Prostate gland (tissue), 2 donors: ENCODE measurements at regions of chr9 and their contacts with region 1.

Region 1: GRCh38 chr9:35903049-35903448 is 3.0 kb upstream of the HRCT1 start:
- DNase-seq: peak; percentile 59
- H3K4me3 ChIP-seq: no peak overlapping the region
- H3K27ac ChIP-seq: peak overlapping the region in 1 of 2 donors; percentile 28
- H3K4me1 ChIP-seq: peaks cover 34% of the 10 kb centered on the region
- H3K27me3 ChIP-seq: no peaks in the 10 kb centered on the region
- CTCF ChIP-seq: peak; percentile 63 to 93 (median 86)
- POLR2A ChIP-seq: no peak

Region 2: DNA sequence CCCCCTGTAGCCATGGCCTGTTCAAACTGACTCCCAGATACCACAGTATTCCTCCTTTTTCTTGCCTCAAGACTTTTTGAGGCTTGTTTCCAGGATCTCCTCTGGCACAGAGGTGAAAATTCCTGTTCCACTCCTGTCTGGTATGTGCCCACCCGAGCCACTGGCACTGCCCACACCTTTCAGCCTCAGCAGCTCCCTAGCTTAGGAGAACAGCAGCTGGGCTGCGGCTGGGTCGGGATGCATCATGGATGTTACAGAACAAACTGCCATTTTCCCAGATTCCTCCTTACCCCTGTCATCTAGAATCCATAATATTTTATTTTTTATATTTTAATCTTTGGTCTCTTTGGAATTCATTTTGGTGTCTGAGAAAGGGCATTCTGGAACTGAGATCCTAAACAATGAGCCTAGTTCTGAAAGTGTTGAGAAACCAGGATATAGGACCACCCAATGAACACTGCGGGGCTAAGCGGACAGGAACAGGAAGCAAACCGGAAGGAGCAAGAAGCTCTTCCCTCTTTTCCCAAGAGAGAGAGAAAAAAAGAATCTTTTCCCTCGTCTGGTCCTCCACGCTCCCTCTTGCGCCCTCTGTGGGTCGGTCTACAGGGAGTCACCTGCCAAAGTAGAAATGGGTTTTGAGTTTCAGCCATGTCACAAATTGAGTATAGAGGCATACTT is 42.4 kb after region 1 on chr9:
- intact Hi-C with region 1: loop called (anchors 1 kb)
- DNase-seq: peak; percentile 43
- H3K4me3 ChIP-seq: no peak overlapping the region
- H3K27ac ChIP-seq: no peak overlapping the region
- H3K4me1 ChIP-seq: no peaks in the 10 kb centered on the region
- H3K27me3 ChIP-seq: no peaks in the 10 kb centered on the region
- CTCF ChIP-seq: peak; percentile 27 to 67 (median 65)
- POLR2A ChIP-seq: no peak

Region 3: GRCh38 chr9:36011379-36011778 is 108.3 kb after region 1 on chr9:
- intact Hi-C with region 1: loop called (anchors 5 kb)
- DNase-seq: no peak
- H3K4me3 ChIP-seq: no peak overlapping the region
- H3K27ac ChIP-seq: no peak overlapping the region
- H3K4me1 ChIP-seq: no peaks in the 10 kb centered on the region
- H3K27me3 ChIP-seq: no peaks in the 10 kb centered on the region
- CTCF ChIP-seq: no peak
- POLR2A ChIP-seq: no peak